ENCODE measurements at regions of chr2 and their contacts with region 1.

Region 1: DNA sequence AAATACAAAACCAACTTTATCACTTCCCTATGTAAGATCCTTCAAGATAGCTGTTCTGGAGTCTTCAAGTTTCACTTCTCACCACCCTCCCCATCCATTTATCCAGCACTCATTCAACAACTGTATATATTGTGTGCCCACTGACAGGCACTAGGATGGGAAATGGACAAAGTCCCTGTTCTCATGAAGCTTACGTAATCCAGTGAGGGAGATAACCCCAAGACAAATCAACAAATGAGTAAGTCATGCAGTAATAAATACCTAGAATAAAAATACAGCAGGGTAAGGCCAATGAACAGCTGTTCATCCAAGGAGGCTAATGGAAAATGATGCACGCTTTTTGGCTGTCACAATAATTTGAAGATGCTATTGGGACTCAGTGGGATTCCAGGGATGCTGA is 133.8 kb downstream of the MEMO1 start:
- DNase-seq: no peak
- H3K4me3 ChIP-seq: no peak overlapping the region
- H3K27ac ChIP-seq: no peak overlapping the region
- H3K4me1 ChIP-seq: no peaks in the 10 kb centered on the region
- H3K27me3 ChIP-seq: no peaks in the 10 kb centered on the region
- CTCF ChIP-seq: no peak
- POLR2A ChIP-seq: no peak

Region 2: DNA sequence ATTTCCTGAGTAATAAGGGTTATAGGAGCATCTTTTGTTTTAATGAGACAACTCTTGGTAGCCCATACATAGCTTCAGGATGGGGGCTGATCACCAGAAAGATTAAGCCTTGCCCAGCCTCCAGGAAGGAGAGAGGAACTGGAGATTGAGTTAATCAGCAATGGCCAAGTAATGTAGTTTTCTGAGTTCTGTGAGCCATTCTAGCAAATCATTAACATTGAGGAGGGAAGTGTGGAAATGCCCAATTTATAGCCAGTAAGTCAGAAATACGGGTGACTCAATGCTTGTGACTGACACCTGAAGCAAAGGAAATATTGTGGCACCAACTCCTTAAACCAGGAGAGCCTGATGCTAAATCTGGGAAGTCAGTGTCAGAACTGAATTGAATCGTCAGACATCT is 91.1 kb before region 1 on chr2:
- intact Hi-C with region 1: loop called (anchors 5 kb)
- DNase-seq: no peak
- H3K4me3 ChIP-seq: no peak overlapping the region
- H3K27ac ChIP-seq: no peak overlapping the region
- H3K4me1 ChIP-seq: no peaks in the 10 kb centered on the region
- H3K27me3 ChIP-seq: no peaks in the 10 kb centered on the region
- CTCF ChIP-seq: no peak
- POLR2A ChIP-seq: no peak

Measured in breast epithelium (tissue), 4 donors.